ENCODE measurements at regions of chr10 and their contacts with region 1.

Region 1: GRCh38 chr10:124530215-124530665 is 68.6 kb downstream of the LHPP start:
- DNase-seq: peak; percentile 88
- H3K4me3 Mint-ChIP-seq: no peak overlapping the region
- H3K27ac Mint-ChIP-seq: no peak overlapping the region
- H3K4me1 Mint-ChIP-seq: peaks cover 4% of the 10 kb centered on the region
- H3K27me3 Mint-ChIP-seq: peaks cover 3% of the 10 kb centered on the region

Region 2: GRCh38 chr10:124748166-124748565 is 217.9 kb after region 1 on chr10:
- CTCF ChIA-PET with region 1: interaction called, 82 read pairs
- POLR2A ChIA-PET with region 1: interaction called, 6 read pairs
- DNase-seq: no peak
- H3K4me3 Mint-ChIP-seq: no peak overlapping the region
- H3K27ac Mint-ChIP-seq: no peak overlapping the region
- H3K4me1 Mint-ChIP-seq: peaks cover 30% of the 10 kb centered on the region
- H3K27me3 Mint-ChIP-seq: no peaks in the 10 kb centered on the region

Region 3: DNA sequence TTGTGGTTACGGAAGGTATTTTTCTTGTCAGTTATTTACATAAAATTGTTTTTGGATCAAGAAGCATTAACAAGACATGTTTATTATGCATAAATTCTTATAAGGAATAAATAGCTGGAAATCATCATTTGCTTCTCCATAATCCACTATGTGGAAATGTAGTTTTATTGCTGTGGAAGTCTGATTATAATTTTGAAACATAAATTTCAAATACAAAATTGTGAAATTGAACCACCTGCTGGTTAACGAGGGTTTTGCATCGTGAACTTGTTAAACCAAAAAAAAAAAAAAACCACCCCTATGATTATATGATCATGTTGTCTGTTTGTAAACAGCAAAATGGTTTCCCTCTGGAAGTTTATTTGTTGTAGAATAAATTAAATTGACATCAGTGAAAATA is 297.2 kb after region 1 on chr10:
- CTCF ChIA-PET with region 1: interaction called, 11 read pairs
- POLR2A ChIA-PET with region 1: no interaction called
- DNase-seq: no peak
- H3K4me3 Mint-ChIP-seq: no peak overlapping the region
- H3K27ac Mint-ChIP-seq: no peak overlapping the region
- H3K4me1 Mint-ChIP-seq: no peaks in the 10 kb centered on the region
- H3K27me3 Mint-ChIP-seq: no peaks in the 10 kb centered on the region